ENCODE measurements at regions of chr15 and their contacts with region 1.

Region 1: DNA sequence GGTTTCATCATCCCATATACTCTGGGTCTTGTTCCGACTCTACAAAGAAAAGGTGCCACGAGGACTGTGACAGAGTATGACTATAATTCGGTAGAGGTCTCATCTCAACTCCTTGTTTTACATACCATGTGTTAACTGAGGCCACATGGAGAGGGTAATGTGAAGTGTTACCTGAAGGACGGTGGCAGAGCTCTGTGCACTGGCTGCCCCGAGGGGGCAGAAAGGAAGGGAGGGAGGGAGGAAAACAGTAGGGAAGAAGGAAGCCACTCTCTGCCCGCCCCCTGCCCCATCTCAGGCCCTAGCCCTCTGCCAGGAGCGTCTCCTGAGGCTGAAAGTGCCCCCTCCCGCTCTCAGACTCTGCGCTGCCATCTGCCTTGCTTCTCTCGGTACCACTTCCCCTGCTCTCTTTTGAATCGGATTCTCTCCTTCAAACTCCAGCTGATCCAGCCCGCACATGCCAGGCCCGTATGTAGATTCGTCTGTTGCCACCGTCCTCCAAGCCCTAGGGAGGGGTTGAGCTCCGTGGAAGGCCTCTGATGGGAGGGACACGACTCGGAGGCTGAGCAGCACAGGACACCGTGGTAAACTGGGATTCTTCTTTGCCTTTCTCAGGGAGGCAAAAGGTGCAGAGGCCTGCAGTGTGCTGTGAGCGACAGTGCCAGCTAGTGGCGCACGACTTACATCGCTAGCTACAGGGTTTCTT is 70.5 kb upstream of the ATP10A start:
- DNase-seq: peak; percentile 52 to 85
- ATAC-seq: peak; percentile 98
- H3K4me3 ChIP-seq: peak overlapping the region; percentile 28; the same call in 1 of the 3 replicates
- H3K27ac ChIP-seq: peak overlapping the region; percentile 83 to 87
- H3K4me1 ChIP-seq: peaks cover 8% of the 10 kb centered on the region; the same call in 2 of the 3 replicates
- CTCF ChIP-seq: peak; percentile 61
- EP300 ChIP-seq: no peak
- POLR2A ChIP-seq: no peak
- RAD21 ChIP-seq: peak; percentile 80 to 87

Region 2: DNA sequence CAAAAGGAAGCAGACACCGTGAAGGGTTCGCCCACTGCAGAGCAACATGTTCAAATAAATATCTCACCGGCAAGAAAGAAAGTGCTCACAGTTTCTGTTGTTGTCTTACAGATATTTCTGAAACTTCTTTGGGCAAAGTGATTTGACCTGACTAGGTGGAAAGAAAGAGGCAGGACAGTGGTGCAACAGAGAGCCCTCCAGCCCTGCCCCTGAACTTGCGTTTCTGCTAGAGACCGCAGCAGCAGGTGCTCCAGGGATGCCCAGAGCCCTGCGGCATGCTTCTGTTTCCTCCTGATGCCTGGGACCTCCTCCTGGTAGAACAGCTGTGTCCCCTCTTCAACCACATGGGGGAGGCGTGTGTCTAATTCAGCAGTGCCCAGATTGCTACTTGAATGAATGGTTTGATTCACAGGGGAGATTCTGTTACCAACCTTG is 193.9 kb before region 1 on chr15:
- CTCF ChIA-PET with region 1: interaction called, 22 read pairs
- POLR2A ChIA-PET with region 1: no interaction called
- DNase-seq: peak; percentile 8 to 40
- ATAC-seq: peak; percentile 76 to 83
- H3K4me3 ChIP-seq: no peak overlapping the region
- H3K27ac ChIP-seq: no peak overlapping the region
- H3K4me1 ChIP-seq: no peaks in the 10 kb centered on the region
- CTCF ChIP-seq: peak; percentile 34; the same call in 2 of the 3 replicates
- EP300 ChIP-seq: no peak
- POLR2A ChIP-seq: no peak
- RAD21 ChIP-seq: peak; percentile 55 to 60; a peak in 4 of 5 replicates

Region 3: DNA sequence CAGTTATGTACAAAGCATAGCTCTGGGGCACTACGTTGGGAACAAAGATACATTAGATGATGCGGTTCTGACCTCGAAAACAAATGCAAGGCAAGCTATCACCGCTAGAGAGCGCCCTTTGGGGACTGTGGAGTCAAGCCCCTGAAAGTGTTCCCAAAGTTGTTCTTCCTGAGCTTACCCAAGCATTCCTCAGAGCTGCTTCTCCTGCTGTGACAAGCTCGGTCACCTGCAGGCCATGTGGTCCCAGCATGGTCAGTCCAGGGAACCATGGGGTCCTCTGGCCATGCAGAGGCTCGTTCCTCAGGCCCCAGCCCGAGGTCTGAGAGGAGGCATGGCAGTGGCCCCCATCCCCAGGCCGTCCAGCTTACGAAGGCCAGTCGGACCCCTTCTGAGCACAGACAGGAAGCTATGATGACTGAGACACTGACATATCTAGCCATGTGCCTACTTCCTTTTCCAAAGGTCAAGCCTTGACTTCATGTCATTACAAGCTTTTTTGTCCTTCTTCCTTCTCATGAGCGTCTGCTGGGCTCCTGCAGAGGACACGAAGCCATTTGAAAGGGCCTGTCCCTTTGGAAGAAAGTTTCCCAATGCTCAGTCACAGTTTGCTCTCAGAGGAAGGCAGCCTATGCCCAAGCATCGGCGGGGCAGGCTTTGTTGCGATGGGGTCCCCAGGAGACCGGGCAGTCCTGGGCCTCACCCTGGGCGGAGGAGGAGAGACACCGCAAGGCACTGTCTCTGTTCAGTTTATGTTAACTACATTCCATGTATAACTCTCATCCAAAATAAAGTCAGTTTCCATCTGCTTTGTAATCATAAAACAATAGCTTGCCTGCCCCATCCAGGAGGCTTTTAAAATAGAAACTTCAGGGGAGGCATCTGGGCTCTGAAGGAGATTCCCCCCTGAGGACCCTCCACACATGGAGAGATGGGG is 149.7 kb before region 1 on chr15:
- CTCF ChIA-PET with region 1: interaction called, 23 read pairs
- POLR2A ChIA-PET with region 1: no interaction called
- DNase-seq: peak; percentile 25 to 49
- ATAC-seq: peak in 1 of 2 experiments; percentile 58; a peak in 3 of 6 replicates
- H3K4me3 ChIP-seq: no peak overlapping the region
- H3K27ac ChIP-seq: peak overlapping the region in 1 of 2 experiments; percentile 47; a peak in 3 of 6 replicates
- H3K4me1 ChIP-seq: peaks cover 23% of the 10 kb centered on the region
- CTCF ChIP-seq: peak; percentile 18; the same call in 2 of the 3 replicates
- EP300 ChIP-seq: no peak
- POLR2A ChIP-seq: no peak
- RAD21 ChIP-seq: peak in 1 of 2 experiments; percentile 29; a peak in 3 of 5 replicates

Region 4: GRCh38 chr15:25850154-25851111 is 83.2 kb before region 1 on chr15:
- CTCF ChIA-PET with region 1: interaction called, 11 read pairs
- POLR2A ChIA-PET with region 1: interaction called, 3 read pairs
- DNase-seq: peak; percentile 60 to 78
- ATAC-seq: peak; percentile 88 to 94
- H3K4me3 ChIP-seq: peak overlapping the region; percentile 40
- H3K27ac ChIP-seq: peak overlapping the region; percentile 98 to 99
- H3K4me1 ChIP-seq: peaks cover 71% of the 10 kb centered on the region
- CTCF ChIP-seq: no peak
- EP300 ChIP-seq: no peak
- POLR2A ChIP-seq: peak; percentile 46
- RAD21 ChIP-seq: no peak; a peak in 1 of 5 replicates

Region 5: DNA sequence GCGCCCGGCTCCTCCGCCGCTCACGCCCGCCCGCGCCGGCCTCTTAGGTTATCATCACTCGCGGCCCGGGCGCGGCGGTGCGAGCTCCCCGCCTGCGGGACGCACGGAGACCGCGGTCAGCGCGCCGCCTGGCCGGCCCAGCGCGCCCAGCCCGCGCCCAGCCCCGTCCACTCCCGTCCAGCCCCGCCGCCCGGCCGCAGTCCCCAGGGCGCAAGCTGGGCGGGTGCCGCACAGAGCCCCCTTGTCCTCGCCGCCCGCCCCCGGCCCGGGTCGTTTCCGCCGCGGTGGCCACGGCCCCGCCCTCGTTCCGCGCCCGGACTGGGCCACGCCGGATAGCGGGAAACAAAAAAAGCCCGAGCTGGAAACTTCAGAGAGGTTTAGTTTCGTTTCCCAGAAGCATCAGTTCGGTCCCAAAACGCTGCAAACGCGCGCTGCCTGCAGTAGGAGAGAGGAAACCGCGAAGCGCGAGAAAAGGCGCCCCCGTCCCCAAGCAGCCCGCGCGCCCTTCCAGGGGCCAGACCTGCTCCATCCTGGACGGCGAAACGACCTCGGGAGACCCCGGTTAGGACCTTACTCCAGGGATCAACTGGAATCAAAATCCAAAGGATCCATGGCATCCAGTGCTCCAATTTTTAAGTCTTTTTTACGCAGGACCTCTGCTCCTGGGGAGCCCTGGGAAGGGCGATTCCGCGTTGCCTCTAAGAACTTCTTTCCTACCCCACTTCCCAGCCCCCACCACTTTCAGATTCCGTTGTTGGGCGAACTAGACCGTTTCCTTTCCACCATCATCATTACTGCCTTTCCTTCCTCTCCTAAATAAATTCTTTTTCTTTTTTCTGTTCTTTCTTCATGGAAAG is 70.3 kb before region 1 on chr15 and contains the start of gene ATP10A:
- CTCF ChIA-PET with region 1: interaction called, 15 read pairs
- POLR2A ChIA-PET with region 1: interaction called, 5 read pairs
- DNase-seq: peak in 1 of 2 experiments; percentile 29
- ATAC-seq: peak; percentile 6 to 39; a peak in 4 of 6 replicates
- H3K4me3 ChIP-seq: peak within 1 kb of the TSS; percentile 70
- H3K27ac ChIP-seq: peak within 1 kb of the TSS; percentile 79 to 96
- H3K4me1 ChIP-seq: peaks cover 43% of the 10 kb centered on the region
- CTCF ChIP-seq: no peak
- EP300 ChIP-seq: no peak
- POLR2A ChIP-seq: no peak
- RAD21 ChIP-seq: 0 out of 5 replicates have a peak, but pooled peaks of 1 of the 2 experiments have one; percentile 13
- polyA plus RNA-seq, gene ATP10A: 5.9 and 6.0 TPM in 2 replicates

Region 6: GRCh38 chr15:25883463-25884259 is 49.9 kb before region 1 on chr15:
- CTCF ChIA-PET with region 1: interaction called, 15 read pairs
- POLR2A ChIA-PET with region 1: no interaction called
- DNase-seq: peak; percentile 46 to 90
- ATAC-seq: peak; percentile 96 to 97
- H3K4me3 ChIP-seq: no peak overlapping the region
- H3K27ac ChIP-seq: peak overlapping the region; percentile 88 to 92
- H3K4me1 ChIP-seq: peaks cover 61% of the 10 kb centered on the region
- CTCF ChIP-seq: no peak
- EP300 ChIP-seq: peak; percentile 82 to 93; a peak in 4 of 5 replicates
- POLR2A ChIP-seq: no peak
- RAD21 ChIP-seq: peak in 1 of 2 experiments; percentile 43; a peak in 3 of 5 replicates

Region 7: GRCh38 chr15:26481338-26481737 is 547.7 kb after region 1 on chr15:
- CTCF ChIA-PET with region 1: no interaction called
- POLR2A ChIA-PET with region 1: no interaction called
- DNase-seq: no peak
- ATAC-seq: no peak
- H3K4me3 ChIP-seq: no peak overlapping the region
- H3K27ac ChIP-seq: no peak overlapping the region
- H3K4me1 ChIP-seq: no peaks in the 10 kb centered on the region
- CTCF ChIP-seq: no peak
- EP300 ChIP-seq: no peak
- POLR2A ChIP-seq: no peak
- RAD21 ChIP-seq: no peak